A673 (cell line): ENCODE measurements at regions of chr2 and their contacts with region 1.

Region 1: DNA sequence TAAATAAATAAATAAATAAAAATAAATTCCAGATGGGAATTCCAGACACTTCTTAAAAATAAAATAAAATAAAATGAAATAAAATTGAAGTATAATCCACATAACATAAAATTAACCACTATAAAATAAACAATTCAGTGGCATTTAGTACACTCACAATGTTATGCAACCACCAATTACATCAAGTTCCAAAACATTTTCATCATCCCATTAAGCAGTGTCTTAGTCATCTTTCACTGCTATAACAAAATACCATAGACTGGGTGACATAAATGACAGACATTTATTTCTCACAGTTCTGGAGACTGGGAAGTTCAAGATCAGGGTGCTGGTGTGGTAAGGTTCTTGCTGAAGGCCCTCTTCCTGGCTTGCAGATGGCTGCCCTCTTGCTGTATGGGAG is 22.6 kb upstream of the PROKR1 start:
- DNase-seq: peak; percentile 47
- H3K4me3 ChIP-seq: no peak overlapping the region
- H3K27ac ChIP-seq: peak overlapping the region; percentile 84
- H3K4me1 ChIP-seq: no peaks in the 10 kb centered on the region
- H3K27me3 ChIP-seq: no peaks in the 10 kb centered on the region
- CTCF ChIP-seq: no peak

Region 2: GRCh38 chr2:68901199-68901960 is 280.6 kb after region 1 on chr2:
- CTCF ChIA-PET with region 1: no interaction called
- POLR2A ChIA-PET with region 1: interaction called, 28 read pairs
- intact Hi-C with region 1: no loop called
- DNase-seq: peak; percentile 47
- H3K4me3 ChIP-seq: no peak overlapping the region
- H3K27ac ChIP-seq: no peak overlapping the region
- H3K4me1 ChIP-seq: no peaks in the 10 kb centered on the region
- H3K27me3 ChIP-seq: no peaks in the 10 kb centered on the region
- CTCF ChIP-seq: peak; percentile 46